Psoas muscle (tissue), 8 donors: ENCODE measurements at regions of chr10 and their contacts with region 1.

Region 1: GRCh38 chr10:11515596-11516430 is 95.6 kb downstream of the USP6NL start:
- DNase-seq: no peak
- ATAC-seq: peak; percentile 77 to 95 (median 86)
- H3K4me3 ChIP-seq: no peak overlapping the region
- H3K27ac ChIP-seq: no peak overlapping the region
- H3K4me1 ChIP-seq: no peaks in the 10 kb centered on the region
- H3K27me3 ChIP-seq: no peaks in the 10 kb centered on the region
- CTCF ChIP-seq: peak; percentile 85

Region 2: DNA sequence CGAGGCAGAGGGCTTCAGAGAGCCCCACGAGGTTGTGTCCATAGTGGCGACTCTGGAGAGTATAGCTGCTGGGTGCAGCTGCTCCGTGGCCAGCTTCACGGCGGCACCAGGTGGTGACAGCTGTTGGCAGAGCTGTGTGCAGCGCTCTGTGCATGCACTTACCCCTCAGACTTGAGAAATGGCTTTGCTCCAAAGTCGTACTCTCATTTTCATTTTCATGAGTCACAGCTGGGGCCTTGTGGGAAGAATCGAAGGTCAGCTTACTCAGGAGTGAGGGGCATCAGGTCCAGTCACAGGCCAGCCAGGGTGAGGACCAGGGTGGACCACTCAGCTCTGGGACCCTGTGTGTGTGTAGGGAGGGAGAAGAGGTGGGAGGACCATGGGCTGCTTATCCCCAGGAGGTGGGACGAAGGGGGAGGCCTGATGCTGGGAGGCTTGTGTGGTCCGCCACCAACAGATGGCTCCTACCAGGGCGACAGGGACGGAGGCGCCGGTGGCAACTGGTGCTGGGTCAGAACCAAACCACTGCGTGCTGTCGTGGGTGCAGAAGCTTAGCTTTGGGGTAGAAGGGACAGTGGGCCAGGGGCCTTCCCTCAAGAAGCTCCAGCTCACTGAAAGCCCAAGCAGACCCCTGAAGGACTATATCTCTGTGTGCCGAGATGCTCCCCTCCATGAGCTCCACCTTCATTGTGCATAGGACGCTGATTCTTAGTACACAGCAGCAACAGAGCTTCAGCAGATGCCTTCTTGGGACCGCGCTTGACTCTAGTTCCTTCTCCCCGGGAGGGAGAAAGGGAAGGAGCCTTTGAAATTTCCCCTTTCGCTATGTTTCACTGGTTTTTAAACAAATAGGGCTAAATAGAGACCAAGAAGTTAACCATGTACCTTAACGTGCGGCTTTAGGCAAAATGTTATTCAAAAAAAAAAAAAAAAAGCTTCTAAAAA is 273.1 kb before region 1 on chr10:
- intact Hi-C with region 1: no loop called
- DNase-seq: peak; percentile 39 to 66
- ATAC-seq: peak; percentile 78 to 90 (median 82)
- H3K4me3 ChIP-seq: no peak overlapping the region
- H3K27ac ChIP-seq: peak overlapping the region; percentile 32
- H3K4me1 ChIP-seq: peaks cover 7% of the 10 kb centered on the region
- H3K27me3 ChIP-seq: no peaks in the 10 kb centered on the region
- CTCF ChIP-seq: no peak

Region 3: DNA sequence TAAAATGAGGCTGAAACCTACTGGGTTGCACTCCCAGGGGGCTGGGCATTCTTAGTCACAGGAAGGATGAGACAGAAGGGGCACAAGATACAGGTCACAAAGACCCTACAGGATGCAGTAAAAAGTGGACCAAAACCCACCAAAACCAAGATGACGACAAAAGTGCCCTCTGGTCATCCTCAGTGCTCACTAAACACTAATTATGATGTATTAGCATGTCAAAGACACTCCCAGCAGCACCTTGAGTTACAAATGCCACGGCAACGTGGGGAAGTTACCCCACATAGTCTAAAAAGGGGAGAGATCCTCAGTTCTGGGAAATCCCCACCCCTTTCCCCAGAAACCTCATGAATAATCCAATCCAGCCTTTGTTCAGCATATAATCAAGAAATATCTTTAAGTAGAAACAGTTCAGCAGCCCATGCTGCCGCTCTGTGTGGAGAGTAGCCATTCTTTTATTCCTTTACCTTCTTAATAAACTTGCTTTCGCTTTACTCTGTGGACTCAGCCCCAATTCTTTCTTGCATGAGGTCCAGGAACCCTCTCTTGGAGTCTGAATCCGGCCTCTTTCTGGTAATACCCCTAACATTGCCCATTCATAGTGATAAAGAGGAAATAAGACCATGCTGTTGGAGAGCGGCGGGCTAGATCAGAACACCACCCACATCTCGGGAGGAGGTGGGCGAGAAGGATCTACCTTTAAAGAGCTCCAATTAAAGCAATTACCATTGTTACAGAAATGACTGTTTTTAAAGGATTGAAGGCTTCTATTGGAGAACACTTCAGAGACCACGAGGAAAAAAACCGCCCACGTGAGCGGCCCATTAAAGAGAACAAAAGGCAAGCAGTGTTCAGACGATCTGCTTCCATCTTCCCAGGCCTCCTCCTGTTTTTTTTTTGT is 75.3 kb before region 1 on chr10:
- intact Hi-C with region 1: no loop called
- DNase-seq: no peak
- ATAC-seq: no peak
- H3K4me3 ChIP-seq: no peak overlapping the region
- H3K27ac ChIP-seq: no peak overlapping the region
- H3K4me1 ChIP-seq: no peaks in the 10 kb centered on the region
- H3K27me3 ChIP-seq: peaks cover 0 to 13% (median 0%) of the 10 kb centered on the region in 3 donors
- CTCF ChIP-seq: no peak

Region 4: GRCh38 chr10:11724938-11725776 is 209.3 kb after region 1 on chr10:
- intact Hi-C with region 1: loop called (anchors 10 kb)
- DNase-seq: no peak
- ATAC-seq: peak in 2 of 4 donors; percentile 46 to 64
- H3K4me3 ChIP-seq: no peak overlapping the region
- H3K27ac ChIP-seq: no peak overlapping the region
- H3K4me1 ChIP-seq: no peaks in the 10 kb centered on the region
- H3K27me3 ChIP-seq: peaks cover 0 to 10% (median 6%) of the 10 kb centered on the region in 3 donors
- CTCF ChIP-seq: peak; percentile 47

Region 5: DNA sequence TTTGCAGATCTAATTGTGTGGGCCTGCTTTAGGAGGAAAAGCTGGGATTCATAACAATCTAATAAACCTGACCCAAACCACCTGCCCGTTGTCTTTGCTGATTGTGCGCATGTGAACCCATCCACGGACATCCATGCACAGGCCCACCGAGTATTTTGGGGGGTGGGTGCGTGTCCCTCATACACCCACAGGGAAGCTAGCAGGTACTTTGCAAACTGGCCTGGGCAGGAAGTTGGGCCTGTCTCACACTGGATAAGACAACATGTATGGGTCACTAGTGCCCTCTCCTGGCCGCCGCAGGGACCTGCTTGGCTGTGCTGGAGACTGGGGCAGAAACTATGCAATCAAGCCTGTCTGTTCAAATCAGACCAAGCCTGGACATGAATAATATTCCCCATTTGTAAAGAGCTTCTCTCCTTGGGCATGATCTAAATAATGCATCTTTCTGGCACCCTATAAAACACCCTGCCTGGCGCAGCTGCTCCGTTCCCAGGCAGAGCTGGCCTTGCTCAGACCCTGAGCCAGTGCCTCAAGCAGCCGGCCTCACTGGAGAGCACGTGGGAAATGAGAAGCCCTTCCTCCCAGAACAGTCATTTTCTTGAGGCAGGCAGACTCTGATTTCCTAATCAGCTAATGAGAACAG is 242.1 kb after region 1 on chr10:
- intact Hi-C with region 1: loop called (anchors 2 to 5 kb)
- DNase-seq: peak; percentile 86 to 93
- ATAC-seq: peak; percentile 80 to 92 (median 84)
- H3K4me3 ChIP-seq: no peak overlapping the region
- H3K27ac ChIP-seq: peak overlapping the region; percentile 80
- H3K4me1 ChIP-seq: peaks cover 27% of the 10 kb centered on the region
- H3K27me3 ChIP-seq: no peaks in the 10 kb centered on the region
- CTCF ChIP-seq: peak; percentile 93